ENCODE measurements at regions of chr4 and their contacts with region 1.

Region 1: GRCh38 chr4:80202190-80202711 is 4.9 kb downstream of the PRDM8 start:
- DNase-seq: peak; percentile 85
- ATAC-seq: peak; percentile 43
- H3K4me3 Mint-ChIP-seq: peak overlapping the region; percentile 62
- H3K27ac Mint-ChIP-seq: no peak overlapping the region
- H3K4me1 Mint-ChIP-seq: peaks cover 32% of the 10 kb centered on the region
- H3K27me3 Mint-ChIP-seq: peaks cover 97% of the 10 kb centered on the region
- CTCF ChIP-seq: peak; percentile 64

Region 2: GRCh38 chr4:80184053-80184790 is 18.0 kb before region 1 on chr4:
- CTCF ChIA-PET with region 1: interaction called, 28 read pairs
- POLR2A ChIA-PET with region 1: interaction called, 3 read pairs
- DNase-seq: peak; percentile 96
- ATAC-seq: peak; percentile 87
- H3K4me3 Mint-ChIP-seq: peak overlapping the region; percentile 83
- H3K27ac Mint-ChIP-seq: no peak overlapping the region
- H3K4me1 Mint-ChIP-seq: peaks cover 32% of the 10 kb centered on the region
- H3K27me3 Mint-ChIP-seq: peaks cover 98% of the 10 kb centered on the region
- CTCF ChIP-seq: peak; percentile 88

Region 3: GRCh38 chr4:80189956-80190677 is 12.1 kb before region 1 on chr4:
- CTCF ChIA-PET with region 1: interaction called, 28 read pairs
- POLR2A ChIA-PET with region 1: no interaction called
- DNase-seq: peak; percentile 76
- ATAC-seq: peak; percentile 76
- H3K4me3 Mint-ChIP-seq: peak overlapping the region; percentile 59
- H3K27ac Mint-ChIP-seq: no peak overlapping the region
- H3K4me1 Mint-ChIP-seq: peaks cover 35% of the 10 kb centered on the region
- H3K27me3 Mint-ChIP-seq: peaks cover 100% of the 10 kb centered on the region
- CTCF ChIP-seq: no peak

Region 4: DNA sequence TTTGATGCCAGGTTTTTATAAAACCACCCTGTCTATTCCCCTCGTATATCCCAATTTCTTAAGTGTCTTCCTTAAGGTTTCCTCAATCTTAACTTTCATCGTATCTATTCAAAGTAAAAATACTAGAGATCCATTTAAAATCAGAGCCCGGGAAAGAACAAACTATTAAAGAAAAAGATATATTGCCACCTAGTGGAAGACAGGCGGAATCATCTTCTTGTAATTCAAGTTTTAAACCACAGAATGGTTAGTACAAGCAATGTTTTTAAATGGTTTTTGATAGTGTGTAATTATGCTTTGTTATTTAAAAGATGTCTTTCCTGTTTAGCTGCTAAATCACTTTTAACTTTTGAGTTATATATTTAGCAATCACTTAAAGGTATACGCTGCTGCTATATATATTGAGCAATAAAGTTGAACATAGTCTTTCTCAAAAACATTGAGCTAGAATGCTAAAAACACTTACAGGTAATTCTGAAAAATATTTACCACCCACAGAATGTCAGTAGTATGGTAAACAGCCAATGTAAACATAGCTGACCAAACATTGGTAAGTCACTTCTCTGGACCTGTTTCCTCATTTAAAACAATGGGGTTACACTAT is 13.3 kb after region 1 on chr4:
- CTCF ChIA-PET with region 1: interaction called, 12 read pairs
- POLR2A ChIA-PET with region 1: no interaction called
- DNase-seq: no peak
- ATAC-seq: no peak
- H3K4me3 Mint-ChIP-seq: no peak overlapping the region
- H3K27ac Mint-ChIP-seq: no peak overlapping the region
- H3K4me1 Mint-ChIP-seq: no peaks in the 10 kb centered on the region
- H3K27me3 Mint-ChIP-seq: peaks cover 55% of the 10 kb centered on the region
- CTCF ChIP-seq: peak; percentile 47; the same call in 1 of the 2 replicates

Region 5: GRCh38 chr4:80266253-80266901 is 64.1 kb after region 1 on chr4 and contains the start of gene FGF5:
- CTCF ChIA-PET with region 1: interaction called, 24 read pairs
- POLR2A ChIA-PET with region 1: no interaction called
- DNase-seq: peak; percentile 52
- ATAC-seq: peak; percentile 43
- H3K4me3 Mint-ChIP-seq: peak within 1 kb of the TSS; percentile 77
- H3K27ac Mint-ChIP-seq: no peak within 1 kb of the TSS
- H3K4me1 Mint-ChIP-seq: peaks cover 57% of the 10 kb centered on the region
- H3K27me3 Mint-ChIP-seq: peaks cover 100% of the 10 kb centered on the region
- CTCF ChIP-seq: no peak
- total RNA-seq, gene FGF5: not detected in 3 replicates

Region 6: DNA sequence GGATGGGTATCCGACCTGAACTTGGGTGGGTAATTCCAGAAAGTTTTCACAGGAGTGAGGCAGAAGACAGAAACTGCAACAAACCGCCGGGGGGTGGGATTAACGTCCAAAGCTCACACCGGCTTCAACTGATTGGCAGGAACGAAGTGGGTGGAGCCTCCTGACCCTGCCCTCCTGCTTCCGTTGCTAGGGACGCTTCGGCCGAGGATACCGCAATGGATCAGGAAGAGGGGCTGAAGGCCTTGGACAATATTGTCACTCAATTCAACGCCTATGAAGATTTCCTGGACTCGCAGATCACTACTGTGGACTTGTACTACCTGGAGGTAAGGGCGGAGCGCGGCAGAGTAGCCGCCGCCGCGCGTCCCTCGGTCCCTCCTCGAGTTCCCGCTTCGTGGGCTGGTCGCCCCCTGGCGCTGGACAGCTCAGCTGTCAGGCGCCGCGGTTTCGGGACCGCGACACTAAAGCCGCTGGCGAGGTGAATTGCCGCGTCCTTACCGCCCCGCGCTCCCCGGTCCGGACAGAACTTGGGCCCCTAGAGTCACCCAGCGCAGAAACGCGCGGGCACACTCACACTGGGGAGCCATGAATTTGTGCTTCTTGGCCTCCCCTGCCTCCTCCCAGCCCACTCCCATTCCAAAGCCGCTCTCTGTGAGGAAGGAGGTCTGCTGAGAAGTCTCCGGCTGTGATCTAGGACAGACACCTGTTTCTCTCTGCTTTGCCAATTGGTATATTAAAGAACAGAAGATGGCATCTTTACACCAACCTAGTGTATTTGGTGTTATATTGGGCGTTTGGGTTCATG is 133.5 kb after region 1 on chr4 and contains the start of gene CFAP299:
- CTCF ChIA-PET with region 1: interaction called, 15 read pairs
- POLR2A ChIA-PET with region 1: no interaction called
- DNase-seq: peak; percentile 92
- ATAC-seq: peak; percentile 95
- H3K4me3 Mint-ChIP-seq: peak within 1 kb of the TSS; percentile 80
- H3K27ac Mint-ChIP-seq: no peak within 1 kb of the TSS
- H3K4me1 Mint-ChIP-seq: peaks cover 8% of the 10 kb centered on the region
- H3K27me3 Mint-ChIP-seq: peaks cover 29% of the 10 kb centered on the region
- CTCF ChIP-seq: no peak
- total RNA-seq, gene CFAP299: not detected in 3 replicates